Activated CD4-positive, alpha-beta memory T cell treated with anti-CD3 and anti-CD28 coated beads for 36 hours (primary cell): ENCODE measurements at regions of chr7 and their contacts with region 1.

Region 1: DNA sequence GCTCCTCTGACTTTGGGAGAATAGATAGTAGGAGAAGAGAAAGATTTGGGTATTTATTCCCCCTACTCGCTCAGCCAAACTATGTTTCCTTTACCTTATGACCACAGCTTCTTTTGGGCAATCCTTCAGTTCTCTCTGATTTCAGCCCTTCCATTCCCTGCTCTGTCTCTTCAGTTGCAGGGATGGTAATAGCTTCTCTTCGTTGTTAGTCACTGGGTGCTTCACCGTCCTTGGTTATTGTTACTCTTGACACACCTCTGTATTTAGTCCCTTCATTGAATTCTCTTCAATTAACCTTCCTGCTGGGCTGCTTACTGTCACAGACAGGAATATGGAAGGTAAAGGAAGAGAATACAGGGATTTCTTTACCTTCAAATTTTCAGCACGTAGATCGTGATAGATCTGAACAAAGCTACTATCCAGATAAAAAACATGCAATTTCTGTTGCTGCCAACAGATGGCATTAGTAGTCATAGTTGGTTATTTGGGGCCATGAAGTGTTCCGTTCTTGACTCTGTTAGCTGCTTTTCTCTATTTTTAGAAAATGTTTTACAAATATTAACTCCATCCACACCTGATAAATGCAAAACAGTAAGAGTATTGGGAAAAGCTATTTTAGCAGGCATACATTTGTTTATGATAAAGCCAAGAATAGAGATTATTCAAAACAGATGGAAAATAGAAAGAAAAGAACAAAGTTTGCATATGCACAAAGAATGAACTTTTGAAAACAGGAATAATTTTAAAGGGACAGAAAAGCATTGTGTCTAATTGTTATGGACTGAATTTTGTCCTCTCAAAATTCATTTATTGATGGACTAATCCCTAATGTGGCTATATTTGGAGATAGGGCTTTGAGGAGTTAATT is 14.0 kb upstream of the PTTG1IP2 start:
- DNase-seq: no peak
- H3K4me3 Mint-ChIP-seq: no peak overlapping the region
- H3K27ac Mint-ChIP-seq: no peak overlapping the region
- H3K4me1 Mint-ChIP-seq: peaks cover 6% of the 10 kb centered on the region
- H3K27me3 Mint-ChIP-seq: peaks cover 5% of the 10 kb centered on the region

Region 2: GRCh38 chr7:90629297-90629918 is 174.0 kb after region 1 on chr7:
- CTCF ChIA-PET with region 1: interaction called, 10 read pairs
- POLR2A ChIA-PET with region 1: no interaction called
- intact Hi-C with region 1: loop called (anchors 1 kb)
- DNase-seq: no peak
- H3K4me3 Mint-ChIP-seq: no peak overlapping the region
- H3K27ac Mint-ChIP-seq: no peak overlapping the region
- H3K4me1 Mint-ChIP-seq: no peaks in the 10 kb centered on the region
- H3K27me3 Mint-ChIP-seq: no peaks in the 10 kb centered on the region

Region 3: GRCh38 chr7:91034459-91035368 is 579.3 kb after region 1 on chr7:
- CTCF ChIA-PET with region 1: interaction called, 14 read pairs
- POLR2A ChIA-PET with region 1: no interaction called
- intact Hi-C with region 1: no loop called
- DNase-seq: peak; percentile 18
- H3K4me3 Mint-ChIP-seq: no peak overlapping the region
- H3K27ac Mint-ChIP-seq: no peak overlapping the region
- H3K4me1 Mint-ChIP-seq: no peaks in the 10 kb centered on the region
- H3K27me3 Mint-ChIP-seq: no peaks in the 10 kb centered on the region